Ascending aorta (tissue), 2 donors: ENCODE measurements at regions of chr16 and their contacts with region 1.

Region 1: DNA sequence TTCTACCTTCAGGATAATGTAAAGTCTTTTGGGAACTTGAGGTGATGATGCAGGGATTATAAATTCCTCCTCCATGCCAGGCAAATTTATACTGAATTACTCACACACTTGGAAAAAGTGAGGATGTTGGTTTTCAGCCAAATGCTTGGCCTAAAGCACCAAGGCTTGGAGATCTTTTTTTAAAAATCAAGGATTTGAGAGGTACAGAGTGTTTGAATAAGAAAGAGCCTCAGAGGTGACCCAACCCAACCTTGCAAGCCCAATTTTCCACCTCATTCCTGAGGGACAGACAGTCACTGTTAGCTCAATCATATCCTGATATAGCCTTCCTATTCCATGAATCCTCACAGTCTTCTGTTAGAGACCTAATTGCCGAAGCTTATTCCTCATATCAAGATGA is 14.0 kb downstream of the GRIN2A start:
- DNase-seq: no peak
- H3K4me3 ChIP-seq: no peak overlapping the region
- H3K27ac ChIP-seq: peak overlapping the region; percentile 63 to 70
- H3K4me1 ChIP-seq: peaks cover 0 to 3% of the 10 kb centered on the region in 2 donors
- H3K27me3 ChIP-seq: no peaks in the 10 kb centered on the region
- CTCF ChIP-seq: no peak

Region 2: DNA sequence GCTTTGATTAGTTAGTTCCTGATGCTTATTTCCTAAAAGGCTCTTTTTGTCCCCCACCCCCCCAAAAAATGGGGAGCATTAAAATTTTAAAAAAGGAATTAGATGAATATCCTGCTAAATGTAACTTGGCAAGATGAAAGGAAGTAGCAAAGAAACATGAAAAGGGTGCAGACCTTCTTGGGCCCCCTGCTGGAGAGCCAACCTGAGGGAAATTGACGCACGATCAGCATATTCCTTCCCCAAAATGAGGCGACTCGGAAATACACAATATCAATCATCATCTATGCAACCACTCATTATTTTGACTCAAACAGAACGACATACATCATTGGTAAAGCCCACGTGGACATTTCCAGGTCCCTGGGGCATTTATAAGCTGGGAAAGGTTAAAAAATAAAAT is 45.7 kb before region 1 on chr16:
- intact Hi-C with region 1: loop called (anchors 2 kb)
- DNase-seq: no peak
- H3K4me3 ChIP-seq: peak overlapping the region; percentile 10 to 42
- H3K27ac ChIP-seq: peak overlapping the region in 1 of 2 donors; percentile 2
- H3K4me1 ChIP-seq: peaks cover 10 to 28% of the 10 kb centered on the region in 2 donors
- H3K27me3 ChIP-seq: no peaks in the 10 kb centered on the region
- CTCF ChIP-seq: peak; percentile 9 to 39 (median 17)